Panc1 (cell line): ENCODE measurements at regions of chr7 and their contacts with region 1.

Region 1: GRCh38 chr7:148940702-148941597 is 56.9 kb upstream of the EZH2 start:
- DNase-seq: peak; percentile 93
- ATAC-seq: peak; percentile 90
- H3K4me3 ChIP-seq: peak overlapping the region; percentile 74 to 77
- H3K27ac ChIP-seq: peak overlapping the region; percentile 93
- H3K4me1 ChIP-seq: peaks cover 8% of the 10 kb centered on the region
- H3K27me3 ChIP-seq: no peaks in the 10 kb centered on the region
- CTCF ChIP-seq: no peak

Region 2: GRCh38 chr7:148698397-148699023 is 242.4 kb before region 1 on chr7 and contains the start of gene CUL1:
- CTCF ChIA-PET with region 1: no interaction called
- POLR2A ChIA-PET with region 1: interaction called, 3 read pairs
- in situ Hi-C with region 1: loop called (anchors 10 kb)
- intact Hi-C with region 1: no loop called
- DNase-seq: no peak
- ATAC-seq: peak; percentile 96
- H3K4me3 ChIP-seq: peak within 1 kb of the TSS; percentile 69 to 72
- H3K27ac ChIP-seq: peak within 1 kb of the TSS; percentile 87
- H3K4me1 ChIP-seq: peaks cover 35% of the 10 kb centered on the region
- H3K27me3 ChIP-seq: no peaks in the 10 kb centered on the region
- CTCF ChIP-seq: no peak
- total RNA-seq, gene CUL1: 60.6 TPM

Region 3: DNA sequence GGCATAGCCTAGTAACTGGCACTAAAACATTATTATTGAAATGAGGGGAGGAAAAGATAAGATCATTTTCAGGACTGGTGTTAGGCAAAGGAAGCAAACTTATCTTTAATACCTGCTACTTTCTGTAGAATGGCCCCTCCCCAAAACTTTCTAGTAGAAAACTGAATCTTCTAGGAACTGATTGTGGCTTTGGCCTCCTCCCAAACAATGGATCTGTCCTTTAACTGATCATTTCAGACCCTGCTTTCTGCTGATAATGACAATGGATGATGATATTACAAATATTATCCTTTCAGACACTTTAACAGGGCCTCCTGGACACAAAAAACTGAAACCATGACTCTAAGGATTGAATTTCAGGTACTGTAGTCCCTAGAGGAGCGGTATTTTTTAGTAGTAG is 112.0 kb before region 1 on chr7:
- CTCF ChIA-PET with region 1: no interaction called
- POLR2A ChIA-PET with region 1: no interaction called
- in situ Hi-C with region 1: no loop called
- intact Hi-C with region 1: no loop called
- DNase-seq: no peak
- ATAC-seq: no peak
- H3K4me3 ChIP-seq: no peak overlapping the region
- H3K27ac ChIP-seq: no peak overlapping the region
- H3K4me1 ChIP-seq: no peaks in the 10 kb centered on the region
- H3K27me3 ChIP-seq: no peaks in the 10 kb centered on the region
- CTCF ChIP-seq: no peak

Region 4: GRCh38 chr7:148884299-148885022 is 56.5 kb before region 1 on chr7:
- CTCF ChIA-PET with region 1: no interaction called
- POLR2A ChIA-PET with region 1: no interaction called
- in situ Hi-C with region 1: no loop called
- intact Hi-C with region 1: loop called (anchors 2 kb)
- DNase-seq: peak; percentile 33
- ATAC-seq: peak; percentile 95
- H3K4me3 ChIP-seq: peak overlapping the region; percentile 80 to 88
- H3K27ac ChIP-seq: peak overlapping the region; percentile 90
- H3K4me1 ChIP-seq: peaks cover 16% of the 10 kb centered on the region
- H3K27me3 ChIP-seq: no peaks in the 10 kb centered on the region
- CTCF ChIP-seq: no peak

Region 5: DNA sequence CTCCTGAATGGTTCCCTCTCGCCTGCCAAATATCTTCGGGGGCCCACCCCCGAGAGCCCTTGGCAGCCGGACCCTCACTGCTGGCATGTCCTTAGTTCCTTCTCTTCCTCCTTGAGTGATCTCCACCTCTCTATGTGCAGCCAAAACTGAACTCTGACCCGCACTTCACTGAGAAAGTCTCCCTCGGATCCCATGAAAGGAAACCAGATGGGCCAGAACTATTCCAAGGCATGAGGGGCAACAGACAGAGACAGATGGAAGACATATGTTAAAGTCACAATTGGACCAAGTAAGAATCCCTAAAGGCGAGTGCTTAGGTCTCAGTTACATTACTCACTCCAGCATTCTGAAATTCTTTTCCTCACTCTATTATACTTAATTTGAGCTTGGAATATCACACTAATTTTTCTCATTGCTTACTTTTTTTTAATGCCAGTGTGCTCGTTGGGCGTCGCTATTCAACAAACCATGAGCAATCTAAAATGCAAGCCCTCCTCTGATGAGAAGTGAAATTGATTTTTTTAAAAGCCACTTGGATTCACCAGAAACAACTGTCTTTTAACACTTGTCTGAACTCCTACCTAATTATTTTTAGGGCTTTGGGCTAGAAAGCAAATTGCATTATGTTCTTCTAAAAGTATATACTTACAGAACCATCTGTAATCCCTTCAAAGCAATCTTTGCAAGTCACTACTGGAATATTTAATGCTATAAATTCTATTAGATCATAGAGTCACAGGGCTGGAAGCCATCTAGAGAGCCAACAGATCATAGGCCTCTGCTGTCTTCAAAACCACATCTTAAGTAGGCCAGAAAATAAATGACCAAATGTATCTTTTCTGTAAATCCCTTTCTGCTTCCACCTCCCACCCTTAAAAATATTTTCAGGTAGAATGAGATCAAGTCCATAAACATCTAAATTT is 13.6 kb before region 1 on chr7:
- CTCF ChIA-PET with region 1: interaction called, 16 read pairs
- POLR2A ChIA-PET with region 1: interaction called, 3 read pairs
- in situ Hi-C with region 1: no loop called
- intact Hi-C with region 1: no loop called
- DNase-seq: no peak
- ATAC-seq: no peak
- H3K4me3 ChIP-seq: no peak overlapping the region
- H3K27ac ChIP-seq: no peak overlapping the region
- H3K4me1 ChIP-seq: no peaks in the 10 kb centered on the region
- H3K27me3 ChIP-seq: no peaks in the 10 kb centered on the region
- CTCF ChIP-seq: no peak

Region 6: DNA sequence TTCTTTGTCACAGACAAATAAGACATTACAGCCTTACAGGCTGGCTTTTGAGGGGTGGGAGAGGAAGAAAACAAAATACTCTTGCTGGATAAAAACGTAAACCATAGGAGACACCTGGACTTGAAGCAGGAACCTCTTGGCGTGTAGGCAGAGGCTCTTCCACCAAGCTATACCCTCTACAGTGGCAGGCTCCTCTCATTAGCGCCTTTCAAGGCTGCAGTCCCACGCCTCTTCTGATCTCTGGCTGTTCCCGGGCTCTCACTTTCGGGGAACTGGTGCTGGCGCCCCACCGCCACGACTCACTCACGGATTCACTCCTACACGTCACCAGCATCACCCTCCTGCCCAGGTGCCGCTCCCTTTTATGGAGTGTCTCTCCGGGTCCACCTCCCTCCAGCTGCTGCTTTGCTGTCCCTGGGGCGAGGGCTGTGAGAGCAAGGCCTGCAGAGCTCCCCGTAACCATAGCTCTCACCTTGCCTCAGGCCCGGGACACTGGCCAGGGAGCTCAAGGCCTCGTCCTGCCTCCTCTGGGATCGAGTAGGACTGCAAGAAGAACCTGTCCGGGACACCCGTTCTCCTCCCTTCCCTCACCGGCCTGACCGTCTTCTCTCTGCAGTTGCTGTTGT is 457.4 kb after region 1 on chr7:
- CTCF ChIA-PET with region 1: no interaction called
- POLR2A ChIA-PET with region 1: no interaction called
- in situ Hi-C with region 1: no loop called
- intact Hi-C with region 1: no loop called
- DNase-seq: no peak
- ATAC-seq: 0 out of 2 replicates have a peak, but pooled peaks have one; percentile 26
- H3K4me3 ChIP-seq: no peak overlapping the region
- H3K27ac ChIP-seq: no peak overlapping the region
- H3K4me1 ChIP-seq: no peaks in the 10 kb centered on the region; the same call in 1 of the 2 replicates
- H3K27me3 ChIP-seq: no peaks in the 10 kb centered on the region
- CTCF ChIP-seq: no peak